Activated T-helper 2 cell treated with anti-CD3 and anti-CD28 coated beads, Interferon-gamma antibody, Interleukin-2, Interleukin-4, amounts not matched to agents 10 μg/mL and 5 μg/mL and 100 μg/mL, durations not matched to agents 14 hours and 24 hours and 36 hours (primary cell): ENCODE measurements at regions of chr3 and their contacts with region 1.

Region 1: DNA sequence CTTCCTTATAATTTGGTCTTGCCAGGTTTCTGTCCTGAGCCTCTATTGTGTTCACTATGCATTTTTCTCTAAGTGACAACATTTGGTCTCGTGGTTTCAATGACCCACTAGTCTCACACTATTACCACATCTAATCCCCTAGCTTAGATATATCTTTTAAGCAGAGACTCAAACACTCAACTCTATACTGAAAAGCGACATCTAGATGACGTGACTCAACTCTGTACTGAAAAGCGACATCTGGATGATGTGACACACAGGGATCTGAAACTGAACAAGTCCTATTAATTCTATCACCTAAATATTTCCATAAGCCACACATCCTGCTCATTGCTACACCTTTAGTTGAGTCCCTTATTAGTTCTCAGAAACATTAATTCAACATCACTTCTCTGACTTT is 141.7 kb upstream of the MBNL1 start:
- DNase-seq: no peak
- H3K4me3 Mint-ChIP-seq: no peak overlapping the region
- H3K27ac Mint-ChIP-seq: no peak overlapping the region
- H3K4me1 Mint-ChIP-seq: peaks cover 19% of the 10 kb centered on the region
- H3K27me3 Mint-ChIP-seq: peaks cover 30% of the 10 kb centered on the region

Region 2: DNA sequence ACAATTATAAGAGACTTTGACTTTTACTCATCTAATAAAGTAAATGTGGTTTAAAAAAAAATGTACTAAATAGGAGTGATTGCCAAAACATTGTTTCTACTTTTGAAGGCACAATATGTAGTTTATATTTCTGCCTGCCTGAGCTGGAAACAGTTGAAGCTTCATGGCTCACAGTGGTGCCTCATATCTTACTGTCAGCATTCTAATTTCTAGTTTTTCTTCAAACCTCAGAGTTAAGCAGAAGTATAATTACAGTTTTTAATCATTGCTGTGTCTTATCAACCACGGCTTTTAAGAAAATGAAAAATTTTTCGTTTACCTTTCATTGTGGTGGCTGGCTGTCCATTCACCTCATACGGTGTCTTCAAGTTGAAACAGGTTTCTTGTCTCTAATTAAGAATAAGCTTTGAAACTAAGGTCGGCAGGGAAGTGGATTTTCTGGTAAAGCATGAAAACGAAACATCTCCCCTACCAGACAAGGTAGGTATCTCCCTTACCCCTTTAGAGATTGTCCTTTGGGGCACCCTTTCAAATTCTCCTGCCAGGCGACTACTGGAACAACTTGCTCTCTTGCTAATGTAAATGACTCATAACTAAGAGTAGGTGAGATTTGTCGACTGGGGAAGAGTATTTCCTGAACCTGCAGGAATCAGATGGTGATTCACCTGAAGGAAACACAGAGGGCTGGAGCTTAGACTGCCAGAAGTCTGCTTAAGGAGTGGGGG is 810.6 kb before region 1 on chr3 and contains the start of gene GPR87:
- intact Hi-C with region 1: loop called (anchors 10 kb)
- DNase-seq: no peak
- H3K4me3 Mint-ChIP-seq: peak within 1 kb of the TSS; percentile 55
- H3K27ac Mint-ChIP-seq: peak within 1 kb of the TSS; percentile 80
- H3K4me1 Mint-ChIP-seq: peaks cover 51% of the 10 kb centered on the region
- H3K27me3 Mint-ChIP-seq: no peaks in the 10 kb centered on the region
- total RNA-seq, gene GPR87: 1.1 and 1.2 TPM in 2 replicates

Region 3: DNA sequence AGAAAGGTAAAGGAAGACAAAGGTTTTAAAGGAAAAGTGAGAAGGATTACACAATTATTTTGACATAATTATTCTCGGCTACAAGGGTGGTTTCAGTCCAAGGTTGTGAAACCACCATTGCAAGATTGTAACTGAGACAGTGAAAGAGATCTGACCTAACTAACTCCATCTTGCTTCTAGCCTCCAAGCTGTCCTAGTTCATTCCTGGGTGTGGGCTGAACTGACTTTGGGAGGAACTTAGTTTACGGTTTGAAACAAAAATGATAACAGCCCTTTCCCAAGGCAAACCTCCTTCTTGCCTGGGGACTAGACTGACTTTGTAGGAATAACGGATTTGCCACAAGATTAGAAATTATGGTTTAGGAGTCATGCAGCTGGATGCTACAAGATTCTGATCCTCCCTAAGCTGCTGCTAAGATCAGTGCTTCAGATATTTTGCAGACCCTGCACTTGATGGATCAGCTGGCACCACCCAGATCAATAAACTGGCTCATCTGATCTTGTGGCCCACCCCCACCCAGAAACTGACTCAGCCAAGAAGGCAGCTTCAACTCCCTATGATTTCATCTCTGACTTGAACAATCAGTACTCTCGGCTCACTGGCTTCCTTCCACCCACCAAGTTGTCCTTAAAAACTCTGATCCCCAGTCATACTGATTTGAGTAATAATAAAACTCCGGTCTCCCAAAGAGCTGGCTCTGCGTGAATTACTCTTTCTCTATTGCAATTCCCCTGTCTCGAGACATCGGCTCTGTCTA is 451.0 kb before region 1 on chr3:
- intact Hi-C with region 1: no loop called
- DNase-seq: no peak
- H3K4me3 Mint-ChIP-seq: no peak overlapping the region
- H3K27ac Mint-ChIP-seq: no peak overlapping the region
- H3K4me1 Mint-ChIP-seq: no peaks in the 10 kb centered on the region
- H3K27me3 Mint-ChIP-seq: no peaks in the 10 kb centered on the region

Region 4: DNA sequence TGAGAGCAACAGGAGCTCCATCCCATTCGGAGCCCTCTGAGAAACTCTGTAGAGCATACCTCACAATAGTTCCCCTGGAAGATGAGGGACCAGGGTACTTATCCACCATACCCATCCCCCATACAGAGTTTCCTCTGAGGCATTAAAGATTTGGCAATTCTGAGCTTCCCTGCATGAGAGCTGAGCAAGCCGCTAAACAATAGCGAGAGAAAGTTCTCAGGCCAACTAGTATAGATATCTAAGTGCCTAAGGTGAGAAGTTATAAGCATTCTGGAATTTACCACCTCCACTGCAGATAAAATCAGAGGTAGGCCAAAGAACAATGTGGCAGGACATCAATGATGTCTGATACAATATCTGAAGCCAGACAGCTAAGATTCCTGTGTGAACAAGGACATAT is 12.6 kb after region 1 on chr3:
- intact Hi-C with region 1: no loop called
- DNase-seq: no peak
- H3K4me3 Mint-ChIP-seq: no peak overlapping the region
- H3K27ac Mint-ChIP-seq: no peak overlapping the region
- H3K4me1 Mint-ChIP-seq: no peaks in the 10 kb centered on the region
- H3K27me3 Mint-ChIP-seq: peaks cover 17% of the 10 kb centered on the region

Region 5: GRCh38 chr3:152241142-152242017 is 114.3 kb after region 1 on chr3:
- intact Hi-C with region 1: loop called (anchors 2 kb)
- DNase-seq: no peak
- H3K4me3 Mint-ChIP-seq: peak overlapping the region; percentile 66
- H3K27ac Mint-ChIP-seq: peak overlapping the region; percentile 77
- H3K4me1 Mint-ChIP-seq: peaks cover 54% of the 10 kb centered on the region
- H3K27me3 Mint-ChIP-seq: no peaks in the 10 kb centered on the region

Region 6: DNA sequence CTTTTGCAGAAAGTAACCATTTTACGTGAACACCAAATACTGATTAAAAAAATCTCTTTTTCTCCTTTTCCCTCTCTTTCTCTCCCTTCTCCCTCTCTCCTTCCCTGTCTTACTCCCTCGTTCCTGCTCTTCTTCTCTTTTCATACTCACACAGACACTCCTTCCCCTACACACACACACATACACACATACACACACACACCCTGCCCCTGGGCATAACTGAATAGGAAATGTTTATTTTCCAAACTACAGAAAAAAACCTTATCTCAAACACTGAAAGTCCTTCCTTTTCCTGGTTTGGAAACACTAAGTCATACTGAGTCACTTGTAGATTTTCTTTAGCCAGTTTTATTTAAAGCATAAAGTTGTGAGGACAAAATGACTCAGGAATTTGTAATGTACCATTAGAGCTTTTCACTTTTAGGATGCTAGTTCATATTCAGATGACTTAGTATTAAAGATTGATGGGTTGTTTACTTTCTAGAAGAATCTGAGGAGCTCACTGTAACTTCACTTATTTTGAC is 204.0 kb after region 1 on chr3:
- intact Hi-C with region 1: loop called (anchors 10 kb)
- DNase-seq: no peak
- H3K4me3 Mint-ChIP-seq: peak overlapping the region; percentile 0
- H3K27ac Mint-ChIP-seq: peak overlapping the region; percentile 78
- H3K4me1 Mint-ChIP-seq: peaks cover 63% of the 10 kb centered on the region
- H3K27me3 Mint-ChIP-seq: no peaks in the 10 kb centered on the region

Region 7: GRCh38 chr3:152695840-152696239 is 568.8 kb after region 1 on chr3:
- intact Hi-C with region 1: loop called (anchors 10 kb)
- DNase-seq: no peak
- H3K4me3 Mint-ChIP-seq: no peak overlapping the region
- H3K27ac Mint-ChIP-seq: no peak overlapping the region
- H3K4me1 Mint-ChIP-seq: peaks cover 27% of the 10 kb centered on the region
- H3K27me3 Mint-ChIP-seq: peaks cover 3% of the 10 kb centered on the region